Body of pancreas (tissue), 4 donors: ENCODE measurements at regions of chr1 and their contacts with region 1.

Region 1: DNA sequence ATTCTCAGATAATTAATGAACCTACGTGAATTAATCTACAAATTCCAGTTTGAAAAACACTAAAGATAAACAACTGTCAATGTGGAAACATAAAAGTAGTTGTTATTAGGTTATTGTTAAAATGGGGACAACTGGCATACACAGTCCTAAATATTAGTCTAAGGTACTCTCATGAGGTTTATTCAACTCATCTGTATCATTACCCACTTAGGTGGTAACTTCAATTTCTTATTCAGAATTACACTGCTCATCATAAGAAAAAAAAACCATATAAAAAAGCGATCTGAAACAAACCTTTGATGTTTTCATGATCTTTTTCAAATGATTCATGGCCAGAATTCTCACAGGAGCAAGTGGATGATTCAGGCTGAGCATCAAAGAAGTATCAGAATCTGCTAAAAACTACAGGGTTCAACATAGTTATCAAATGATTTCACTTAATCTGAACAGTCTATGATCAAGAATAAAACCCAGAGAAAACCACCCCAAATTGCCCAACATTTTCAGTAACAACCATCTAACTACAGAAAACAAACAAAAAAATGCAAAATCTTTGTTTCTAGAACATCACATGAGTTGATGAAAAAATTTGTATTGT is 13.7 kb downstream of the HEATR1 start:
- DNase-seq: no peak
- ATAC-seq: no peak
- H3K4me3 ChIP-seq: no peak overlapping the region
- H3K27ac ChIP-seq: no peak overlapping the region
- H3K4me1 ChIP-seq: no peaks in the 10 kb centered on the region
- H3K27me3 ChIP-seq: no peaks in the 10 kb centered on the region
- CTCF ChIP-seq: no peak
- POLR2A ChIP-seq: no peak

Region 2: GRCh38 chr1:236543065-236543669 is 47.5 kb before region 1 on chr1:
- intact Hi-C with region 1: loop called (anchors 10 kb)
- DNase-seq: no peak
- ATAC-seq: no peak
- H3K4me3 ChIP-seq: no peak overlapping the region
- H3K27ac ChIP-seq: no peak overlapping the region
- H3K4me1 ChIP-seq: no peaks in the 10 kb centered on the region
- H3K27me3 ChIP-seq: no peaks in the 10 kb centered on the region
- CTCF ChIP-seq: no peak
- POLR2A ChIP-seq: no peak